CD8-positive, alpha-beta T cell (primary cell): ENCODE measurements at regions of chr22 and their contacts with region 1.

Region 1: GRCh38 chr22:26672590-26673468 is 15.4 kb downstream of the MIAT start:
- DNase-seq: peak; percentile 77 to 98 (median 94)
- ATAC-seq: peak; percentile 66
- H3K4me3 ChIP-seq: peak overlapping the region; percentile 79 to 81
- H3K4me3 Mint-ChIP-seq: peak overlapping the region; percentile 98
- H3K27ac ChIP-seq: peak overlapping the region; percentile 83 to 98
- H3K27ac Mint-ChIP-seq: peak overlapping the region; percentile 100
- H3K4me1 ChIP-seq: peaks cover 78% of the 10 kb centered on the region
- H3K4me1 Mint-ChIP-seq: peaks cover 79% of the 10 kb centered on the region
- H3K27me3 ChIP-seq: no peaks in the 10 kb centered on the region
- H3K27me3 Mint-ChIP-seq: no peaks in the 10 kb centered on the region
- CTCF ChIP-seq: no peak

Region 2: DNA sequence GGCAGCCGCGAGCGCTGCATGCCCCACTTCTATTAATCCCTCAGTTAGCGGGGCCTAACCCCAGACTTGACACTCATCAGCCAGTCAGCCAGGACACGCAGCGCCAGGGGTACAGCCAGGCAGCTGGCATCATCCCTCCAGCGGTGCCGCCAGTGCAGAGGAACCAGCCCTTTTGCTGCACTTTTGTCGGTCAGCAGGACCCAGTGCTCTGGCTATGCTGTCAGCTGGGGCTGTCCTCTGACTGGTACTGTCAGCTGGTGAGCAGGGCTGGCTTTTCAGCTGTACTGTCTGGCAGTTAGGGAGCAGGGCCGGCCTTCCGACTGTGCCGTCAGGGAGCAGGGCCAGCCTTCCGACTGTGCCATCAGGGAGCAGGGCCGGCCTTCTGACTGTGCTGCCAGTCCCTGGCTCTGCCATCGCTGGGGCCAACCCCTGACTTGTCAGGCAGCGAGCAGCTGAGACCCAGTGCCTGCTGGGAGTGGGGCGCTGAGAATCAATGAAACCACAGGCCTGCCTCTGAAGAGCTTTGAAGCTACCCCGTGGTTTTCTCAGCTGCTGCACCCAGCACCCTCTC is 1604.9 kb before region 1 on chr22:
- CTCF ChIA-PET with region 1: no interaction called
- POLR2A ChIA-PET with region 1: no interaction called
- intact Hi-C with region 1: loop called in 1 of 2 experiments (anchors 10 kb)
- DNase-seq: peak; percentile 73 to 97 (median 87)
- ATAC-seq: peak; percentile 85
- H3K4me3 ChIP-seq: peak overlapping the region; percentile 1 to 40
- H3K4me3 Mint-ChIP-seq: peak overlapping the region; percentile 77
- H3K27ac ChIP-seq: peak overlapping the region; percentile 69 to 72
- H3K27ac Mint-ChIP-seq: peak overlapping the region; percentile 99
- H3K4me1 ChIP-seq: peaks cover 67% of the 10 kb centered on the region
- H3K4me1 Mint-ChIP-seq: peaks cover 94% of the 10 kb centered on the region
- H3K27me3 ChIP-seq: no peaks in the 10 kb centered on the region
- H3K27me3 Mint-ChIP-seq: no peaks in the 10 kb centered on the region
- CTCF ChIP-seq: no peak

Region 3: GRCh38 chr22:26428515-26429457 is 244.0 kb before region 1 on chr22 and contains the start of gene ASPHD2:
- CTCF ChIA-PET with region 1: no interaction called
- POLR2A ChIA-PET with region 1: interaction called, 4 read pairs
- intact Hi-C with region 1: loop called in 1 of 2 experiments (anchors 2 kb)
- DNase-seq: peak; percentile 62 to 92 (median 80)
- ATAC-seq: peak; percentile 89
- H3K4me3 ChIP-seq: peak within 1 kb of the TSS; percentile 84 to 88
- H3K4me3 Mint-ChIP-seq: peak within 1 kb of the TSS; percentile 100
- H3K27ac ChIP-seq: peak within 1 kb of the TSS; percentile 89 to 96
- H3K27ac Mint-ChIP-seq: peak within 1 kb of the TSS; percentile 99
- H3K4me1 ChIP-seq: peaks cover 23% of the 10 kb centered on the region
- H3K4me1 Mint-ChIP-seq: peaks cover 34% of the 10 kb centered on the region
- H3K27me3 ChIP-seq: no peaks in the 10 kb centered on the region
- H3K27me3 Mint-ChIP-seq: no peaks in the 10 kb centered on the region
- CTCF ChIP-seq: no peak
- total RNA-seq, gene ASPHD2: 0.90 to 1.00 TPM

Region 4: DNA sequence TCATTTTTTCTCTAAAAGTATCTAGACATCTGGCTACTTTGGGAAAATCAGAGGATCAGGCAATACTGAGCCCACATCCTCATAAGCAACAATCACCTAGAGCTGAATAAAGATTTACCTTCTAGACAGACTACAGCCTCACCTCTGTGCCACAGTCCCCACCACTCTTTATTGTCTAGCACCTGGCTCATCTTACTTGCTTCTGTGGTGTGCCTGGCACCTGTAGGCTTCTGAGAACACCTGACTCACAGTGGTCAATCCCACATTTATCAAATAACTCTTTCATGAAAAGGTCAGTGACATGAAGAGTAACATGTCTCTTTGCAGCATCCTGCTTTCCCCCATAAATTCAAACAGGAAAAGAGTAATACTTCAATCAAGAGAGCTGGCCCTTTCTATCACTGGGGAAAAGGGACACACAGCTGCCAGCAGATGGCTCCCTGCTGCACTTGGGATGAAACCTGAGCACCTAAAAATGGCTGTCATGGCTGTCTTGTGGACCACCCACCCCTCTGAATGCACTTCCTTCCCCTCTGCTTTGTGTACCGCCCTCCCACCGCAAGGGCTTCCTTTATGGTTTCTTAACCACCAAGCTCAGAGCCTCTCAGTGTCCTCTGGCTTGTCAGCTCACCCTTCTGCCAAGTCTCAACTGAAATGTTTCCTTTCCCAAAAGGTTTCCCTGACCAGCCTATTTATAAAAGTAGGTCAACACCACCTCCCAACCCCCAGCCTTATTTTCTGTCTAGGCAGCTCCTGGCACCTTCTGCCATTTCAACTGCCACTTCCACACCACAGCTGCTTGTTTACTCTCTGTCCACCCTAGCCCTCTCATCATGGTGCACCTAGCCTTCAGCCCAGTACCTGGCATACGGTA is 169.9 kb before region 1 on chr22:
- CTCF ChIA-PET with region 1: interaction called, 40 read pairs
- POLR2A ChIA-PET with region 1: interaction called, 3 read pairs
- intact Hi-C with region 1: loop called in 1 of 2 experiments (anchors 2 kb)
- DNase-seq: peak; percentile 24 to 91 (median 64)
- ATAC-seq: peak; percentile 93
- H3K4me3 ChIP-seq: no peak overlapping the region
- H3K4me3 Mint-ChIP-seq: peak overlapping the region; percentile 66
- H3K27ac ChIP-seq: peak overlapping the region in 1 of 2 experiments; percentile 55
- H3K27ac Mint-ChIP-seq: peak overlapping the region; percentile 88
- H3K4me1 ChIP-seq: peaks cover 17% of the 10 kb centered on the region
- H3K4me1 Mint-ChIP-seq: peaks cover 24% of the 10 kb centered on the region
- H3K27me3 ChIP-seq: no peaks in the 10 kb centered on the region
- H3K27me3 Mint-ChIP-seq: no peaks in the 10 kb centered on the region
- CTCF ChIP-seq: peak; percentile 42

Region 5: GRCh38 chr22:26589845-26590736 is 82.7 kb before region 1 on chr22 and contains the start of gene TPST2:
- CTCF ChIA-PET with region 1: no interaction called
- POLR2A ChIA-PET with region 1: interaction called, 6 read pairs
- intact Hi-C with region 1: loop called (anchors 1 to 2 kb)
- DNase-seq: peak; percentile 64 to 90 (median 77)
- ATAC-seq: peak; percentile 81
- H3K4me3 ChIP-seq: peak within 1 kb of the TSS; percentile 75 to 88
- H3K4me3 Mint-ChIP-seq: peak within 1 kb of the TSS; percentile 94
- H3K27ac ChIP-seq: peak within 1 kb of the TSS; percentile 75 to 85
- H3K27ac Mint-ChIP-seq: peak within 1 kb of the TSS; percentile 96
- H3K4me1 ChIP-seq: peaks cover 79% of the 10 kb centered on the region
- H3K4me1 Mint-ChIP-seq: peaks cover 80% of the 10 kb centered on the region
- H3K27me3 ChIP-seq: no peaks in the 10 kb centered on the region
- H3K27me3 Mint-ChIP-seq: no peaks in the 10 kb centered on the region
- CTCF ChIP-seq: no peak
- total RNA-seq, gene TPST2: 24.3 to 26.3 TPM

Region 6: GRCh38 chr22:26658671-26659478 is 14.0 kb before region 1 on chr22:
- CTCF ChIA-PET with region 1: interaction called, 4 read pairs
- POLR2A ChIA-PET with region 1: interaction called, 34 read pairs
- intact Hi-C with region 1: loop called in 1 of 2 experiments (anchors 1 kb)
- DNase-seq: peak in 8 of 9 experiments; percentile 62 to 87 (median 81)
- ATAC-seq: peak; percentile 74
- H3K4me3 ChIP-seq: peak overlapping the region; percentile 91 to 96
- H3K4me3 Mint-ChIP-seq: peak overlapping the region; percentile 91
- H3K27ac ChIP-seq: peak overlapping the region; percentile 21 to 57
- H3K27ac Mint-ChIP-seq: peak overlapping the region; percentile 96
- H3K4me1 ChIP-seq: peaks cover 20% of the 10 kb centered on the region
- H3K4me1 Mint-ChIP-seq: peaks cover 30% of the 10 kb centered on the region
- H3K27me3 ChIP-seq: no peaks in the 10 kb centered on the region
- H3K27me3 Mint-ChIP-seq: no peaks in the 10 kb centered on the region
- CTCF ChIP-seq: no peak

Region 7: DNA sequence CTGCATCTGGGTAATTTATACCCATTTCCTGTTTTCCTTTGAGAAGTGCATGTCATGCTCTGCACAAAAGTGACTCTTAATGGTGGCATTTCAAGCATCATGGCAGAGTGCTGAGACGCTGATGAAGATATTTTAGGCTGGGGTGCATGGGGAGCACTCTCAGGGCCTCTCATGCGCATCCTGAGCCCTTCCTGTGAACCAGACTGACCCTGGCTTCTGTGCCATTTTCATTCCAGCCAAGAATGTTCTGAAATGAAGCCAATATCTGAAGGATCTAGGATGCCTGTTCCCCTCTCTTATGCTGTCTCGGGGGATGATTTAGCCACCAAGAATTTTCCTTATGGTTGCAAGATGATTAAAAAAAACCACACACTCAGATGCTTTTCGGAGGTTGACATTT is 46.1 kb after region 1 on chr22:
- CTCF ChIA-PET with region 1: no interaction called
- POLR2A ChIA-PET with region 1: no interaction called
- intact Hi-C with region 1: no loop called
- DNase-seq: no peak
- ATAC-seq: no peak
- H3K4me3 ChIP-seq: no peak overlapping the region
- H3K4me3 Mint-ChIP-seq: no peak overlapping the region
- H3K27ac ChIP-seq: no peak overlapping the region
- H3K27ac Mint-ChIP-seq: no peak overlapping the region
- H3K4me1 ChIP-seq: no peaks in the 10 kb centered on the region
- H3K4me1 Mint-ChIP-seq: peaks cover 6% of the 10 kb centered on the region
- H3K27me3 ChIP-seq: no peaks in the 10 kb centered on the region
- H3K27me3 Mint-ChIP-seq: no peaks in the 10 kb centered on the region
- CTCF ChIP-seq: no peak

Region 8: GRCh38 chr22:26751217-26751616 is 78.4 kb after region 1 on chr22:
- CTCF ChIA-PET with region 1: no interaction called
- POLR2A ChIA-PET with region 1: no interaction called
- intact Hi-C with region 1: no loop called
- DNase-seq: no peak
- ATAC-seq: no peak
- H3K4me3 ChIP-seq: no peak overlapping the region
- H3K4me3 Mint-ChIP-seq: no peak overlapping the region
- H3K27ac ChIP-seq: no peak overlapping the region
- H3K27ac Mint-ChIP-seq: no peak overlapping the region
- H3K4me1 ChIP-seq: no peaks in the 10 kb centered on the region
- H3K4me1 Mint-ChIP-seq: peaks cover 11% of the 10 kb centered on the region
- H3K27me3 ChIP-seq: no peaks in the 10 kb centered on the region
- H3K27me3 Mint-ChIP-seq: no peaks in the 10 kb centered on the region
- CTCF ChIP-seq: no peak

Region 9: DNA sequence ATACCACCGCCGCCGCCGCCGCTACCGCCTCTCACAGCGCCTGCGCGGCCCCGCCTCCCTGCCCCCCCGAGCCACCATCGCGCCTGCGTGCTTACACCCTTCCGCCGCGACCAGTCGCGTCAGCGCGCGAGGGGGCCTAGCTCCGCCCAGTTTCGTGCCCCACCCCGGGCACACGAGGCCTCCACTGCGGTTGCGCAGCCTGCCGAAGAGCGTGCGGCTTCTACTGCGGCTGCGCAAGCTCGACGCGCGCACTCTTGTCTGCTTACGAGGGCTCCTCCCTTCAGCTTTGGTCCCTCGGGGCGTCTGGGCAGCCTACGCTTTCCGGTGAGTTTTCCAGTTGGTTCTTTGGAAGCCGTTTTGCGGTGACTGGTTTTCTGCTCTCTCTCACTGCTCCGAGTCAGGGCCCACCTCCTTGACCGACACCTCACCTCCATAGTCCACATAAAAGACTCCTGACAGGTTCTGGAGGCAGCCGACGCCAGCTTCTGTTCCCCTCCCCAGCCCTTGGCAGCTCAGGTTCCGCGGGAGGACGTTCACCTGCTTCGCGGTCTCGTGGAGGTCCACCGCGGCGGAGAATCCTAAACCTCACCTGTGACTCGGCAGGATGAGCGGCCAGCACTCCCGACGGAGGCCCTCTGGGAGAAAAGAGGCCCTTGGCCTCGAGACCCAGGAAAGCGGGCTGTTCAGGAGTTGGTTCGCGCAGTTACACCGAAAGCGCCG is 1246.6 kb after region 1 on chr22 and contains the start of gene PITPNB:
- CTCF ChIA-PET with region 1: no interaction called
- POLR2A ChIA-PET with region 1: interaction called, 3 read pairs
- intact Hi-C with region 1: loop called (anchors 2 kb)
- DNase-seq: peak; percentile 98 to 100 (median 99)
- ATAC-seq: peak; percentile 89
- H3K4me3 ChIP-seq: peak within 1 kb of the TSS; percentile 66 to 82
- H3K4me3 Mint-ChIP-seq: peak within 1 kb of the TSS; percentile 98
- H3K27ac ChIP-seq: peak within 1 kb of the TSS; percentile 87 to 98
- H3K27ac Mint-ChIP-seq: peak within 1 kb of the TSS; percentile 99
- H3K4me1 ChIP-seq: peaks cover 25% of the 10 kb centered on the region
- H3K4me1 Mint-ChIP-seq: peaks cover 68% of the 10 kb centered on the region
- H3K27me3 ChIP-seq: no peaks in the 10 kb centered on the region
- H3K27me3 Mint-ChIP-seq: no peaks in the 10 kb centered on the region
- CTCF ChIP-seq: no peak
- total RNA-seq, gene PITPNB: 40.8 to 41.5 TPM